PC-3 (cell line): ENCODE measurements at regions of chr4 and their contacts with region 1.

Region 1: DNA sequence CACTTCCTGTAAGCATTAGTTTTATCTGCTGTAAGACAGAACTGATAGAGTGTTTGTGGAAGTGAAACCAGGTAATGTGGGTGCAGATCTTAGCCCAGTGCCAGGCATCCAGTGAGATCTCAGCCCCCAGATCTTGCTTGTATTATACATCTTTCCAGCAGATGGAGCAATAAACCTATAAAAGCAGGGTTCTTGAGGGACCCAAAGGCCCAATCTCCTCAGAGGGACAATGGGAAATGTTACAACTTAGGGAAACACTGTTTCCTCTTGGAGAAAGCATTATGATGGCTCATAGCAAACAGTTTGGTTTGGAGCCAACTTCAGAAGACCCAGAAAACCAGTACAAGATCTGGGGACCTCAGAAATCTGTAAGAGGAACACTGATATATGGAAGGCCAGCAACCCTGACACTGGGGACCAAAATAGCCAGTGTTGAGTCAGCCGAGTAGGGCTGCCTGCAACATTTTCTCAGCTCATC is 206.3 kb downstream of the SLC7A11 start:
- DNase-seq: peak; percentile 79
- ATAC-seq: peak; percentile 85
- H3K4me3 ChIP-seq: no peak overlapping the region
- H3K27ac ChIP-seq: peak overlapping the region; percentile 91
- H3K4me1 ChIP-seq: peaks cover 14% of the 10 kb centered on the region
- H3K27me3 ChIP-seq: no peaks in the 10 kb centered on the region
- CTCF ChIP-seq: peak; percentile 75

Region 2: GRCh38 chr4:137819964-137820383 is 215.8 kb before region 1 on chr4:
- CTCF ChIA-PET with region 1: interaction called, 3 read pairs
- POLR2A ChIA-PET with region 1: no interaction called
- intact Hi-C with region 1: loop called (anchors 2 kb)
- DNase-seq: peak; percentile 65
- ATAC-seq: peak; percentile 90
- H3K4me3 ChIP-seq: no peak overlapping the region
- H3K27ac ChIP-seq: no peak overlapping the region
- H3K4me1 ChIP-seq: peaks cover 6% of the 10 kb centered on the region; the same call in 1 of the 2 replicates
- H3K27me3 ChIP-seq: no peaks in the 10 kb centered on the region
- CTCF ChIP-seq: peak; percentile 81

Region 3: DNA sequence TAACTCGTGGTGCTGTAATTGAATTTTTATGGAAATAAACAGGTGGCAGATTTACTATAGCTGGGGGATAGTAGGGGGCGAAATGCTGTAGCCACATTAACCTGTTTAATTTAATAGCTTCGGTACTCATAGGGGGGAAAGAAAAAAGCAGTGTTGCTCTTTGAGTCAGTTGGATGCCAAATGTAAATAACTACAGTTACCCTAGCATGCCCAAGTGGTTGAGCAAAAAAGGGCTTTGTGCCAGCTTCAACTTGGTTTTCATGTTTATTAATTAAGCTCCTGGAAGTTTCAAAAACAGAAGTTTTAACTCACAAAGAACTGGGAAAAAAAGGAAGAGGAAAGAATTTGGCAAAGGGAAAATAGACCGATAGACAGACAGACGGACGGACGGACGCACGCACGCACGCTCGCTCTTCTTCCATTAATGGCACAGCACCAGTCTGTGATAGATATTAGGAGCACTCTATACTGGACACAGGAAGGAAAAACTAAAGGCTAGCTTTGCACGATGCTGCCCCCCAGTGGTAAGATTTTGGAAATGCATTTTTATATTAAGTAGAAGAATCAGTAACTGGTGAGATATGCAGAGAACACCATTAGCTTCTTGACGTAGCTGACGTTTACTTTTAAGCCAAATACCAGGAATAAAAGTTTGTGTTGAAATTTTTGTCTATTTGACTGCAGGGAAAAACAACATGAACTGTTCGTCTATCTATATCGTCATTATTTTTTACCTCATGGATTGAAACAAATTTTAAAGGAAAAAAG is 54.5 kb after region 1 on chr4:
- CTCF ChIA-PET with region 1: interaction called, 24 read pairs
- POLR2A ChIA-PET with region 1: no interaction called
- intact Hi-C with region 1: loop called (anchors 1 kb)
- DNase-seq: peak; percentile 85
- ATAC-seq: peak; percentile 88
- H3K4me3 ChIP-seq: peak overlapping the region; percentile 66
- H3K27ac ChIP-seq: no peak overlapping the region
- H3K4me1 ChIP-seq: peaks cover 4% of the 10 kb centered on the region; the same call in 1 of the 2 replicates
- H3K27me3 ChIP-seq: no peaks in the 10 kb centered on the region
- CTCF ChIP-seq: peak; percentile 74

Region 4: GRCh38 chr4:138182838-138183426 is 147.1 kb after region 1 on chr4:
- CTCF ChIA-PET with region 1: interaction called, 8 read pairs
- POLR2A ChIA-PET with region 1: no interaction called
- intact Hi-C with region 1: loop called (anchors 5 kb)
- DNase-seq: peak; percentile 67
- ATAC-seq: peak; percentile 15; the same call in 1 of the 2 replicates
- H3K4me3 ChIP-seq: no peak overlapping the region
- H3K27ac ChIP-seq: no peak overlapping the region
- H3K4me1 ChIP-seq: no peaks in the 10 kb centered on the region
- H3K27me3 ChIP-seq: no peaks in the 10 kb centered on the region
- CTCF ChIP-seq: peak; percentile 73

Region 5: GRCh38 chr4:138576684-138577083 is 540.9 kb after region 1 on chr4:
- CTCF ChIA-PET with region 1: interaction called, 3 read pairs
- POLR2A ChIA-PET with region 1: no interaction called
- intact Hi-C with region 1: loop called (anchors 5 kb)
- DNase-seq: peak; percentile 64
- ATAC-seq: peak; percentile 33; the same call in 1 of the 2 replicates
- H3K4me3 ChIP-seq: no peak overlapping the region
- H3K27ac ChIP-seq: no peak overlapping the region
- H3K4me1 ChIP-seq: no peaks in the 10 kb centered on the region
- H3K27me3 ChIP-seq: no peaks in the 10 kb centered on the region
- CTCF ChIP-seq: peak; percentile 75

Region 6: GRCh38 chr4:138870737-138871554 is 835.1 kb after region 1 on chr4:
- CTCF ChIA-PET with region 1: no interaction called
- POLR2A ChIA-PET with region 1: no interaction called
- intact Hi-C with region 1: loop called (anchors 5 kb)
- DNase-seq: peak; percentile 80
- ATAC-seq: peak; percentile 67
- H3K4me3 ChIP-seq: no peak overlapping the region
- H3K27ac ChIP-seq: no peak overlapping the region
- H3K4me1 ChIP-seq: peaks cover 5% of the 10 kb centered on the region
- H3K27me3 ChIP-seq: no peaks in the 10 kb centered on the region
- CTCF ChIP-seq: peak; percentile 84